Endothelial cell of umbilical vein (primary cell): ENCODE measurements at regions of chr12 and their contacts with region 1.

Region 1: GRCh38 chr12:116708826-116709756 is 28.8 kb downstream of the SPRING1 start:
- DNase-seq: peak; percentile 52
- H3K4me3 ChIP-seq: no peak overlapping the region
- H3K27ac ChIP-seq: no peak overlapping the region
- H3K4me1 ChIP-seq: no peaks in the 10 kb centered on the region
- H3K27me3 ChIP-seq: peaks cover 15% of the 10 kb centered on the region in 2 experiments
- CTCF ChIP-seq: peak; percentile 44 to 65
- POLR2A ChIP-seq: no peak

Region 2: DNA sequence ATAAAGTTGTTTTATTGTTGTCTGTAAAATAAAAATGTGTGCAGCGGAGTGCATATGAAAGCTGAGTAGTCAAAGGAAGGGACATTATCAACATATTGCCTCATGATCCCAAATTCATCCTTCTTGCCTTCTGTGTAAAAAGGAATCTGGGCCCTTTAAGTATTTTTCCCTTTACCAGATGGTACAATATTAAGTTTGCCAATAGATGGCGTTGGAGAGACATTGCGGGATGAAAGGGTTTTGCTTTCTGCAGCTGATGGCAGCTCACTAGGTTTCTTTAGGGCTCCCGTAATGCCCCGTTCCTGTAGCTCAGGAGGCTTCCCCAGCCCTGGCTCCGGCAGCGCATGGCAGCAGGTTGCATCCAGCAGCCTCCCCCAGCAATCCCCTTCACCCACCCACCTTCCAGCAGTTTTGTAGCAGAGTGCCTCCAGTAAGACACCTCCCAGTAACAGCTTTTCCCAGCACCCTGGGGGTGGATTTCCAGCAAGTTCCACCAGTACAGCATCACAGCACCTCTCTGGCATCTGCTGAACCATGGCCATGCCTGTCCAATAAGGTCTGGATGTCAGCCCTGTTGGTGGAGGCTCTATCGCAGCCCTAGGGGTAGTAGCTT is 786.0 kb before region 1 on chr12:
- CTCF ChIA-PET with region 1: interaction called, 11 read pairs
- POLR2A ChIA-PET with region 1: no interaction called
- dilution Hi-C with region 1: no loop called
- intact Hi-C with region 1: loop called (anchors 2 kb)
- DNase-seq: no peak
- H3K4me3 ChIP-seq: no peak overlapping the region
- H3K27ac ChIP-seq: no peak overlapping the region
- H3K4me1 ChIP-seq: no peaks in the 10 kb centered on the region
- H3K27me3 ChIP-seq: peaks cover 0 to 2% of the 10 kb centered on the region in 2 experiments
- CTCF ChIP-seq: peak in 1 of 2 donors; percentile 35
- POLR2A ChIP-seq: no peak

Region 3: GRCh38 chr12:116015525-116015924 is 693.6 kb before region 1 on chr12:
- CTCF ChIA-PET with region 1: interaction called, 15 read pairs
- POLR2A ChIA-PET with region 1: no interaction called
- dilution Hi-C with region 1: no loop called
- intact Hi-C with region 1: no loop called
- DNase-seq: peak; percentile 64
- H3K4me3 ChIP-seq: no peak overlapping the region
- H3K27ac ChIP-seq: no peak overlapping the region
- H3K4me1 ChIP-seq: no peaks in the 10 kb centered on the region
- H3K27me3 ChIP-seq: no peaks in the 10 kb centered on the region
- CTCF ChIP-seq: peak; percentile 21 to 34
- POLR2A ChIP-seq: no peak

Region 4: DNA sequence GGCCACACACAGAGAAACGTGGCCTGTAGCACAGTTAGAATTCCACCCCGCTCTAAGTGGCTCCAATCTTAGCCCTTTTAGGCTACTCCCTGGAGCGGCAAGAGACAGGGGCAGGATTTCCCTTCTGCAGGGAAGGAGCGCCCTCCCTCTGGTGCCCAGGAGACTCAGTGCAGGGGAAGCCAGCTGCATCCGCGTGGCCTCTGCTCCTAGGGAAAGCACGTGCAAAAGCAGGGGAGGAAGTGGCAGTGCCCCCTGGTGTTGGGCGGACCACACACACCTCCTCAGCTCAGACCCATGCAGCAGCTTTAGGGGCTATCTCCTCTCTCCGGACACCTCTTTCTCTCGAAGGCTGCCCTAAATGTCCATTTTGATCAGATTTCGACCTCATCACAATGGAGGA is 21.2 kb before region 1 on chr12:
- CTCF ChIA-PET with region 1: interaction called, 11 read pairs
- POLR2A ChIA-PET with region 1: no interaction called
- dilution Hi-C with region 1: no loop called
- intact Hi-C with region 1: no loop called
- DNase-seq: peak; percentile 28
- H3K4me3 ChIP-seq: no peak overlapping the region
- H3K27ac ChIP-seq: no peak overlapping the region
- H3K4me1 ChIP-seq: no peaks in the 10 kb centered on the region
- H3K27me3 ChIP-seq: peaks cover 3% of the 10 kb centered on the region in 2 experiments
- CTCF ChIP-seq: peak; percentile 42 to 62
- POLR2A ChIP-seq: no peak

Region 5: DNA sequence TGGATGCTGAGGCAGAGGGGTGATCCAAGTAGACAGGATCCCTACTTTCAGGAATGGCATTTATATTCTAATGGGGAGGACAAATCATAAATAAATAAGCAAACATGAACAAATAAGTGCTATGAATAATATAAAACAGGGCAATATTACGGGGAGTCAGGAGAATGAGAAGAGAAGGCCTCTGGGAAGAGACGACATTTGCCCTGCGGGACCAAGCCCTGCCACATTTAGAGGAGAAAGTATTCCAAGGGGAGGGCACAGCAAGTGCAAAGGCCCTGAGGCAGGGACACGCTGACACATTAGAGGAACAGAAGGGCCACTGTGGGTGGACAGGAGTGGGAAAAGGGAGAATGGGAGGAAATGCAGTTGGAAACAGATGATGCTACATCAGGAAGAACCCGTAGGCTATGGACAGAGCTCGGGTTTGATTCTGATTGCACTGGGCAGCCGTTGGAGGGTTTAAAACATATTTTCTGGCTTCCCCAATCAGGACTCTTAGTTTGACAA is 30.3 kb after region 1 on chr12:
- CTCF ChIA-PET with region 1: no interaction called
- POLR2A ChIA-PET with region 1: no interaction called
- dilution Hi-C with region 1: no loop called
- intact Hi-C with region 1: no loop called
- DNase-seq: no peak
- H3K4me3 ChIP-seq: no peak overlapping the region
- H3K27ac ChIP-seq: no peak overlapping the region
- H3K4me1 ChIP-seq: peaks cover 10% of the 10 kb centered on the region
- H3K27me3 ChIP-seq: no peaks in the 10 kb centered on the region
- CTCF ChIP-seq: no peak
- POLR2A ChIP-seq: no peak

Region 6: DNA sequence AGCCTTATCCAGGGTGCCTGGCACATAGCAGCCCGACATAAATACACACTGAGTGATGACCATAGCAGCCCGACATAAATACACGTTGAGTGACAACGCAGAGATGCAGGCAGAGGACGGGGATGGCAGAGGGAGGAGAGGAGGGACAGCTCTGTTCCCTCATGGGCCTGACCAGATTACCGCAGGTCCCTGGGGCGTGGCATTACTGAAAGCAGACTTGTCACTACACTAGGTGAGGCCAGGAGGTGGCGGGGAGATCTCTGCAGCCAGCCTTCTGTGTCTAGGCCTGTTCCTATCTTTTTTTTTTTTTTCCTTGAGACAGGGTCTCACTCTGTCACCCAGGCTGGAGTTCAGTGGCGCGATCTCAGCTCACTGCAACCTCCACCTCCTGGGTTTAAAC is 103.1 kb after region 1 on chr12:
- CTCF ChIA-PET with region 1: no interaction called
- POLR2A ChIA-PET with region 1: no interaction called
- dilution Hi-C with region 1: no loop called
- intact Hi-C with region 1: no loop called
- DNase-seq: no peak
- H3K4me3 ChIP-seq: no peak overlapping the region
- H3K27ac ChIP-seq: no peak overlapping the region
- H3K4me1 ChIP-seq: no peaks in the 10 kb centered on the region
- H3K27me3 ChIP-seq: no peaks in the 10 kb centered on the region
- CTCF ChIP-seq: no peak
- POLR2A ChIP-seq: no peak

Region 7: GRCh38 chr12:116832353-116832752 is 123.3 kb after region 1 on chr12:
- CTCF ChIA-PET with region 1: no interaction called
- POLR2A ChIA-PET with region 1: no interaction called
- dilution Hi-C with region 1: no loop called
- intact Hi-C with region 1: no loop called
- DNase-seq: no peak
- H3K4me3 ChIP-seq: no peak overlapping the region
- H3K27ac ChIP-seq: no peak overlapping the region
- H3K4me1 ChIP-seq: no peaks in the 10 kb centered on the region
- H3K27me3 ChIP-seq: no peaks in the 10 kb centered on the region
- CTCF ChIP-seq: no peak
- POLR2A ChIP-seq: no peak

Region 8: DNA sequence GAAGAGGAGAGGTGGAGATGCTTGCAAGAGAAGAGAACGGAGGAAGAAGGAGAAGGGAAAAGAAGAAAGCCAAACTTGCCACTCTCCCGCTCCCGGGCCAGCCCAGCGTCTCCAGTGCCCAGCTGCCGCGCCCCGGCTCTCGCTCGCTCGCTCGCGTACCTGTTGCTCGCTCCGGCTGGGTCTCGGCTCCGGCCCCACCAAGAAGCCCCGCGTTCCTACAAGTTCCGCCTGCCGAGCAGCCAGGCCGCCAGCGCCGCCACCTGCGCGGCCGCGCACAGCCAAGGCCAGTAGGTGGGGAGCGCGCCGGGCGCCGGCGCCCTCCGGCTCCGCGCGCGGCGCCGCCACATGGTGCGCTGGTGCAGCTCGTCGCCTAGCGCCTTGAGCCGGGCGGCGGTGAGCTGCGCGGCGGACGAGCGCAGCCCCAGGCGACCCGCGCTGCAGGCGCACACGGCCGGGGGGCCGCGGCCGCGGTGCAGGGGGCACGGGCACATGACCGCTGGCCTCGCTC is 171.8 kb after region 1 on chr12:
- CTCF ChIA-PET with region 1: interaction called, 61 read pairs
- POLR2A ChIA-PET with region 1: no interaction called
- dilution Hi-C with region 1: no loop called
- intact Hi-C with region 1: no loop called
- DNase-seq: peak; percentile 13
- H3K4me3 ChIP-seq: no peak overlapping the region
- H3K27ac ChIP-seq: no peak overlapping the region
- H3K4me1 ChIP-seq: no peaks in the 10 kb centered on the region
- H3K27me3 ChIP-seq: peaks cover 57 to 72% of the 10 kb centered on the region in 2 experiments
- CTCF ChIP-seq: no peak
- POLR2A ChIP-seq: no peak